CD14-positive monocyte (primary cell): ENCODE measurements at regions of chr19 and their contacts with region 1.

Region 1: DNA sequence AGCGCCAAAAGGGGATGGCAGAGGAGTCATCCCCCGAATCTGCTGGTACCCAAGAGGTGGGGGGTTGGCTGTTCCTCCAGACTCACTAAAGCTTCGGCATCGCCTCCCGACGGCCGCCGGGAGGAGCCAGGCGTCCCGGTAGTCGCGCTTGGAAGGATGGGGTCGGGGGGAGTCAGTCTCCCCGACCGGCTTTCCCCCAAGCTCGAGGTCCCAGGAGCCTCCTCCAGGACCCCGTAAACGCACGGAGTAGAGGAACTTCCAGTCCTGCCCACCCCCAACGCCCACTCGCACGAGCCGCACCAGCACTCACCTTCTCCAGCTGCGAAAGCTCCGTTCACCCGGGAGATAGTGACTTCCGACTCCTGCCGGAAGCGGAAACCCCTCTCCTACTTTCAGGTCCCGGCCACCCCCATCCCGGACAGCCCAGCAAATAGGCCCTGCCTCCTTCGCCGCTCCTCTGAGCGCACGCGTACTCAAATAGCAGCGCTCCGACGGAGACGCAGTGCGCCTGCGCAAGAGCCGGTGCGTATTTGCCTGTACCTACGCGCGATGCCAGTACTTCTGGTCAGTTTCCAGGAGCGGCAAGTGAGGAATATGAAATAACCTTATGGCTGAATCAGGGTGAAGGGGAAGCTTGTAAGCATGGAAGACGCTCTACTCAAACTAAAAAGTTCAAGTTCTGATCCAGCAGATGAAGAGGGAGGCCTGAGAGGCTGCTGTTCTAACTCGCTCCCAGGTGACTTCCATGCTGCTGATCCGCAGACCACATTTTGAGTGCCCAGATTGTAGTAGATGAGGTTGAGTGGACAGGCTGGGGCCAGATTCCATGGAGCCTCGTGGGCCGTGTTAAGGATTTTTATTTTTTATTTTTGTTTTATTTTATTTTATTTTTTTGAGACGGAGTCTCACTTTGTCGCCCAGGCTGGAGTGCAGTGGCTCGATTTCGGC is at the start of gene ELOF1:
- DNase-seq: peak; percentile 98 to 99 (median 98)
- H3K4me3 ChIP-seq: peak within 1 kb of the TSS; percentile 63 to 97 (median 86)
- H3K4me3 Mint-ChIP-seq: peak within 1 kb of the TSS; percentile 95 to 96
- H3K27ac ChIP-seq: peak within 1 kb of the TSS; percentile 59 to 74
- H3K27ac Mint-ChIP-seq: peak within 1 kb of the TSS; percentile 77 to 97 (median 94)
- H3K4me1 ChIP-seq: peaks cover 33 to 52% of the 10 kb centered on the region in 2 donors
- H3K4me1 Mint-ChIP-seq: peaks cover 60% of the 10 kb centered on the region
- H3K27me3 ChIP-seq: no peaks in the 10 kb centered on the region
- H3K27me3 Mint-ChIP-seq: peaks cover 0 to 1% (median 0%) of the 10 kb centered on the region in 3 donors
- CTCF ChIP-seq: no peak
- polyA plus RNA-seq, gene ELOF1: 48.5 to 95.5 (median 77.5) TPM

Region 2: GRCh38 chr19:10424011-10424637 is 1135.0 kb before region 1 on chr19:
- intact Hi-C with region 1: loop called in 1 of 2 experiments (anchors 10 kb)
- DNase-seq: peak; percentile 83 to 94 (median 85)
- H3K4me3 ChIP-seq: peak overlapping the region; percentile 27 to 71 (median 35)
- H3K4me3 Mint-ChIP-seq: peak overlapping the region; percentile 81 to 90
- H3K27ac ChIP-seq: peak overlapping the region; percentile 60 to 84
- H3K27ac Mint-ChIP-seq: peak overlapping the region; percentile 92 to 99 (median 97)
- H3K4me1 ChIP-seq: peaks cover 87 to 96% of the 10 kb centered on the region in 2 donors
- H3K4me1 Mint-ChIP-seq: peaks cover 89% of the 10 kb centered on the region
- H3K27me3 ChIP-seq: peaks cover 25 to 39% of the 10 kb centered on the region in 2 donors
- H3K27me3 Mint-ChIP-seq: peaks cover 48 to 75% (median 59%) of the 10 kb centered on the region in 3 donors
- CTCF ChIP-seq: peak; percentile 91

Region 3: DNA sequence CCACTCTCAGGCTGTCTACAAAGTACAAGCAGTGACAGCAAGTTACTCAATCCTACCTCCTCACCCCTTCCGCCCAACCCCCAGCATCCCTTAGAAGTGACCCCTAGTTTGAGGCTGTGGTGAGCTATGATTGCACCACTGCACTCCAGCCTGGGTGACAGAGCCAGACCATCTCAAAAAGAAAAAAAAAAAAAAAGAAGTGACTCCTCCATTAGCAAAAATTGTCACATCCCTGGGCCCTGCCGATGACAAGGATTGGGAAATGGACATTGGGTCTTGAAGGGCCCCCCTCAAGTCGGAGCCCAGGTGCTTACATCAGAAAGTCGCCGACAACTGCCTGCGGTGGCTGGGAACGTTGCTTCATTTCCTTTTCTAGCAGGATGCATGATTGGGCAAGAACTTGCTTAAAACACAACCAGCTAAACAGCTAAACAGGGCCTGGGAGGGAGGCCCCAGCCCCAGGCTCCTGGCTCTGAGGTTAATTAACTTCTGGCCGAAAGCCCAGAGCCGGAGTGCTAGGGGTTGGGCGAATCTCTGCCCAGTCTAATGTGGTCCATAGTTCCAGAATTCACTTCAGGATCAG is 235.0 kb before region 1 on chr19:
- intact Hi-C with region 1: loop called in 1 of 2 experiments (anchors 10 kb)
- DNase-seq: peak; percentile 97 to 99 (median 99)
- H3K4me3 ChIP-seq: peak overlapping the region in 2 of 3 experiments; percentile 15 to 77
- H3K4me3 Mint-ChIP-seq: peak overlapping the region; percentile 64 to 83
- H3K27ac ChIP-seq: peak overlapping the region; percentile 94 to 97
- H3K27ac Mint-ChIP-seq: peak overlapping the region; percentile 91 to 99 (median 99)
- H3K4me1 ChIP-seq: peaks cover 72 to 80% of the 10 kb centered on the region in 2 donors
- H3K4me1 Mint-ChIP-seq: peaks cover 77% of the 10 kb centered on the region
- H3K27me3 ChIP-seq: no peaks in the 10 kb centered on the region
- H3K27me3 Mint-ChIP-seq: peaks cover 0 to 4% (median 0%) of the 10 kb centered on the region in 3 donors
- CTCF ChIP-seq: no peak

Region 4: DNA sequence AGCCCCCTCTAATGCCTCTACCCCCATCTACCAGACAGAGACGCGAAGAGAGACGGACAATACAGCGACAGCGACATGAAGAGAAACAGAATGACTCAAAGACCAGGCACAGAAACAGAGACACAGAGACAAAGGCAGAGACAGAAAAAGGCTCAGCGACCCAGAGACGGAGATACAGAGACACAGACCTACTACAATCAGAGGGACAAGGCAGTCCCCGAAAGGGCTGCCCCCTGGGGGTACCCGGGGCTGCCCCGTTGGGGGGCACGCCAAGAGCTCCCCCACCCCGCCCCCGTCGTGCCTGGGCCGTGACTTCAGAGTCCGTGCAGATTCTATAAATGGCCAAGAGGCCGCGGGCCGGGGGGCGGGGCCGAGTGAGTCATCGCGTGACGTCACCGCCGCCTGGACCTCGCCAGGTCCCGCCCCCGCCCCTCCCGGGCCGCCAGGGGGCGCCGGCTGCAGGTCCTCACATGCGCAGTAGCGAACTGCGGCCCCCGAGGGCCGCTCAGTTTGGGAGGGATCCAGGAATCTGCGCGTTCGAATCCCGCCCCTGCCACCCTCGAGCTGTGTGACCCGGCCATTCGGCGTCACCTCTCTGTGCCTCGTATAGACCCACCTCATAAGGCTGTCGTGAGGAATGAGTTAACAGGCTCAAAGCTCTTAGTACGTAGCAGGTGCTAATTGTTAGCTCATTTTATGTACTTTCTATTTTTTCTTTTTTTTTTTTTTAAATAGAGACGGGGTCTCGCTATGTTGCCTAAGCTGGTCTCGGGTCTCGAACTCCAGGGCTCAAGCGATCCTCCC is 23.2 kb before region 1 on chr19:
- intact Hi-C with region 1: loop called in 1 of 2 experiments (anchors 2 kb)
- DNase-seq: peak; percentile 83 to 91 (median 83)
- H3K4me3 ChIP-seq: peak overlapping the region in 1 of 3 experiments; percentile 58
- H3K4me3 Mint-ChIP-seq: peak overlapping the region; percentile 49 to 79
- H3K27ac ChIP-seq: peak overlapping the region; percentile 39 to 78
- H3K27ac Mint-ChIP-seq: peak overlapping the region; percentile 84 to 94 (median 91)
- H3K4me1 ChIP-seq: peaks cover 17 to 22% of the 10 kb centered on the region in 2 donors
- H3K4me1 Mint-ChIP-seq: peaks cover 21% of the 10 kb centered on the region
- H3K27me3 ChIP-seq: peaks cover 12 to 32% of the 10 kb centered on the region in 2 donors
- H3K27me3 Mint-ChIP-seq: peaks cover 24 to 36% (median 29%) of the 10 kb centered on the region in 3 donors
- CTCF ChIP-seq: peak; percentile 93

Region 5: GRCh38 chr19:11587302-11587974 is 28.3 kb after region 1 on chr19:
- intact Hi-C with region 1: loop called (anchors 1 kb)
- DNase-seq: peak; percentile 72 to 81 (median 78)
- H3K4me3 ChIP-seq: no peak overlapping the region
- H3K4me3 Mint-ChIP-seq: no peak overlapping the region
- H3K27ac ChIP-seq: no peak overlapping the region
- H3K27ac Mint-ChIP-seq: peak overlapping the region in 5 of 7 donors; percentile 30 to 70 (median 65)
- H3K4me1 ChIP-seq: peaks cover 28 to 53% of the 10 kb centered on the region in 2 donors
- H3K4me1 Mint-ChIP-seq: peaks cover 42% of the 10 kb centered on the region
- H3K27me3 ChIP-seq: no peaks in the 10 kb centered on the region
- H3K27me3 Mint-ChIP-seq: peaks cover 2 to 4% (median 2%) of the 10 kb centered on the region in 3 donors
- CTCF ChIP-seq: peak; percentile 86